ENCODE measurements at regions of chr1 and their contacts with region 1.

Region 1: DNA sequence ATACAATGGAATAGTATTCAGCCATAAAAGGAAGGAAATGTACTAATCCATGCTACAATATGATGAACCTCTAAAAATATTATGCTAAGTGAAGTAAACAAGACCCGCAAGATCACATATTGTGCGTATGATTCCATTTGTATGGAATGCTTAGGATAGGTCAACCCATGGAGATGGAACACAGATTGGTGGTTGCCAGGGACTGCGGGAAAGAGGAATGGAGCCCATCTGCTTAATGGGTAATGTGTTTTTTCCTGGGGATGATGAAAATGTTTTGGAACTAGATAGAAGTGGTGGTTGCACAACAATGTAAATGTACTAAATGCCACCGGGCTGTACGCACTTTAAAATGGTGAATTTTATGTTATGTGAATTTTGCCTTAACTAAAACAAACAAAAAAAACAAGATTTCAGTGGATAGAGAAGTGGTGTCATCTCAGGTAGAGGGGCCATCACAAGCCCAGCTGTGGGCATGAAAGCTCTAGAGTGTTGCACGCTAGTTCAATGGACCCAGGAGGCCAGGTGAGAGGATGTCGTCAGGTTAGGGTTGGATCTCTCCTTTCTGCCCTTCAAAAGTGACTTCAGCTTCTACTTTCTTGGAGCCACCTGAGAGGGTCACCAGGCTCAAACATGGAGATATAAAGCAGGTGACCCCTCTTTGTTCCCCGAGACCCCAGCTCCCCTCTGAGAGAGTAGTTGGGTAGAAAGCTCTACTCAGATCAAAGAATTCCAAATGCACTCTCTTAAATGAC is 2.4 kb downstream of the C1orf115 start:
- DNase-seq: peak; percentile 16
- H3K4me3 ChIP-seq: no peak overlapping the region
- CTCF ChIP-seq: no peak

Region 2: GRCh38 chr1:220680085-220680687 is 12.4 kb before region 1 on chr1:
- CTCF ChIA-PET with region 1: interaction called, 16 read pairs
- POLR2A ChIA-PET with region 1: no interaction called
- DNase-seq: no peak
- H3K4me3 ChIP-seq: no peak overlapping the region
- CTCF ChIP-seq: peak; percentile 70

Region 3: DNA sequence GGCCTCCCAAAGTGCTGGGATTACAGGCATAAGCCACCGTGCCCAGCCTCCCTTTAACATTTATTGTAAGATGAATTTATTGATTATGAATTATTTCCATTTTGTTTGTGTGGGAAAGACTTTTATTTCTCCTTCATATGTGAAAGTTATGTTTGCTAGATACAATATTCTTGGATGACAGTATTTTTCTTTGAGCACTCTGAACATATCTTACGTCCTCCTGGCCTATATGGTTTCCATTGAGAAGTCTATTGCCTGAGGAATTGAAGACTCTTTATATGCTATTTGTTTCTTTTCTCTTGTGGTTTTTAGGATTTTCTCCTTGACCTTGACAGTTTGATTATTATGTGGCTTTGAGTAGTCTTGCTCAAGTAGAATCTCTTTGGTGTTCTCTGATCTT is 159.8 kb after region 1 on chr1:
- CTCF ChIA-PET with region 1: no interaction called
- POLR2A ChIA-PET with region 1: no interaction called
- DNase-seq: no peak
- H3K4me3 ChIP-seq: no peak overlapping the region
- CTCF ChIP-seq: no peak